PC-3 (cell line): ENCODE measurements at regions of chr3 and their contacts with region 1.

Region 1: DNA sequence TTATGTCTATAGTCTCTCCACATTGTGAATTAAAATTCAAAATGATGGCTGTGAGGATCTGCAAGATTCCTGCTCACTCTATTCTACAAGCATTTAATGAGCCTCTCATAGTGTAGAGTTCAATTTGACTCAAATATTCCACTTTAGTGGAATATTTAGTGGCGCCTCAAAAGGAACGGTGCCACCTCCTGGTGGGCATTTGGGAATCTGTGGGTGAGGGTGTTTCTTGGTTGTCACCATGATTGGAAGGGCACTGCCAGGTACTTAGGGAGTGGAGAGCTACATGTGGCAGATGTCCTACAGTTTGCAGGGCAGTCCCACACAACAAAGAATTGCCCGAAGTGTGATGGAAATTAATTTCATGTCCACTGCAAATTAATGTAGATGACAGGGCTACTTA is 21.5 kb upstream of the KCNMB3 start:
- DNase-seq: peak; percentile 46
- ATAC-seq: peak; percentile 68
- H3K4me3 ChIP-seq: no peak overlapping the region
- H3K27ac ChIP-seq: no peak overlapping the region
- H3K4me1 ChIP-seq: no peaks in the 10 kb centered on the region
- H3K27me3 ChIP-seq: no peaks in the 10 kb centered on the region
- CTCF ChIP-seq: peak; percentile 64

Region 2: DNA sequence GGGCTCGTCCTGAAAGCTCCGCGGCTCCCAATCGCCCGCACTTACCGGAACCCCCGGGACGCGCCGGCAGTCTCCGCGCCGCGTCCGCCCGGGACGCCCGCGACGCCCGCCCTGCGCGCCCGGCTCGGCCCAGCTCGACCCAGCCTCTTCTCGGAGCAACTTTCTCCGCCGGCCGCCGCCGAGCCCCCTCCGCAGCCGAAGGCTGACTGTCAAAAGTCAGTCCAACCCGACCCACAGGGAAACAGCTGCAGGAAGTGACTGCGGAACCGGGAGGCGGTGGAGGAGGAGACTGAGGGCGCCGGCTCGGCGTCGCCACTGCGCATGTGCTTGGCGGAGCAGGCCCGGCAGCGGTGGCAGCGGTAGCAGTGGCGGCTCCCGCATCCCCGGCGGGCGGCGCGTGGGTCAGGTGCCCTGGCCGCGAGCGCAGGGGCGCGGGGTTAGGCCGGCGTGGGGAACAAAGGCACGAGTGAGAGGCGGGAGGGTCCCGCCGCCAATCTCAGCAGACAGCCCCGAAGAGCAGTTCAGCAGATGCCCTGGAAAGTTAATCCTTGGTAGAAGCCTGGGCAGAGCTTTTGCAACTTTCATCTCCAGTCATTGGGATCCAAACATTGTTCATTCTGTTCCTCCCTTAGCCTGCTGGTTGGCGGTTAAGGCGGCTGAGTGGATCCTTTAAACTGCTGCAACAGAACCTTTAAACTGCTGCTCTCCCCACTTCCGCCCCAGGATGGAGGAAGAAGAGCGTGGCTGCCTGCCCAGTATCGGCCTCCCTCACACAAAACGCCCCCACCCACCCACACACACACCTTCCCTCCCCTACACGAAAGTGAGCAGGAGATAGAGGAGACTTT is 200.6 kb before region 1 on chr3 and contains the start of gene ZMAT3:
- CTCF ChIA-PET with region 1: no interaction called
- POLR2A ChIA-PET with region 1: no interaction called
- intact Hi-C with region 1: loop called (anchors 1 kb)
- DNase-seq: peak; percentile 83
- ATAC-seq: peak; percentile 91
- H3K4me3 ChIP-seq: peak within 1 kb of the TSS; percentile 82
- H3K27ac ChIP-seq: peak within 1 kb of the TSS; percentile 27
- H3K4me1 ChIP-seq: peaks cover 9% of the 10 kb centered on the region
- H3K27me3 ChIP-seq: no peaks in the 10 kb centered on the region
- CTCF ChIP-seq: no peak
- total RNA-seq, gene ZMAT3: 2.0 and 2.9 TPM in 2 replicates